Breast epithelium (tissue), 4 donors: ENCODE measurements at regions of chr13 and their contacts with region 1.

Region 1: DNA sequence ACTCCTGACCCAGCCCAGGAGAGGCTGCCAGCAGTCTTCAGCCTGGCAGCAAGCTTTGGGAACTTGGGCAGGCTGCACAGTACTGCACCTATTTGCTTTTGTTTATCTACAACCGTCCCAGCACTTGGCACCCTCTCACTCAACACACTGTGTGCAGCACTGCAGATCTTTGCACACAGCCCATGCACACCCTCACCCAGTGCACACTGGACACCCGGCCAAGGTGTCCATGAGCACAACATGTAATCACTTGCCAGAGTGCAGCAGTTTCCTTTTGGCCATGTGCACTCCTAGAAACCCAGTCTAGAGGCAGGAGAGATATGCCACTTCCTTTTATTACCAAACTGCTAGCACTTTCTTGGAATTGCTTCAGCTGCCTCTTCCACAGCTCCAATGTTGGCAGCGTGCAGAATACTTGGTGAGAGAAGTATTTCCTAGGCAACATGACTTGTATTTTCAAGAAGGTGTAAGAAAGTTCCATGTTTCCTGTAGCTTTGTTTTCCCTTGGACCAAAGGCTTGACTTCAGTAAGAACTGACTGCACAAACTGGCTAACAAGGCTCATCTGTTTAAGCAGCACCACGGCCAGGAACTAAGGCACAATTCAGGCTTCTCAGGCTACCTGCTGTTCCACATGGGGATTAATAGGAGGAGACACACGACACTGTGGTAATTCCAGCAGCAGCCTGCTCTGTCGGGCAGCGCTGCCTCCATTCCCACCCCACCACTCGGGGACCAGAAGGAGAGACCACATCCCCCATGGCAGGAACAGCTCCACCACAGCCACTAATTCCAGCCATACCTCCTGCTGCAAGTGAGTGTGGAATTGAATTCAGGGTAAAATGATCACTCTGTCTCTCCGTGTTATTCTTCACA is 15.3 kb downstream of the ATP7B start:
- DNase-seq: no peak
- H3K4me3 ChIP-seq: peak overlapping the region in 2 of 3 donors; percentile 9 to 22
- H3K27ac ChIP-seq: peak overlapping the region; percentile 63 to 67
- H3K4me1 ChIP-seq: no peaks in the 10 kb centered on the region
- H3K27me3 ChIP-seq: no peaks in the 10 kb centered on the region
- CTCF ChIP-seq: no peak
- POLR2A ChIP-seq: no peak

Region 2: GRCh38 chr13:52128714-52129700 is 133.1 kb after region 1 on chr13 and contains the start of gene NEK5:
- intact Hi-C with region 1: loop called (anchors 10 kb)
- DNase-seq: peak in 1 of 2 donors; percentile 58
- H3K4me3 ChIP-seq: peak within 1 kb of the TSS; percentile 62 to 78 (median 73)
- H3K27ac ChIP-seq: peak within 1 kb of the TSS; percentile 16 to 56
- H3K4me1 ChIP-seq: no peaks in the 10 kb centered on the region
- H3K27me3 ChIP-seq: no peaks in the 10 kb centered on the region
- CTCF ChIP-seq: peak; percentile 20 to 72 (median 54)
- POLR2A ChIP-seq: no peak
- total RNA-seq, gene NEK5: 0.16 to 2.9 (median 0.98) TPM